PC-9 (cell line): ENCODE measurements at regions of chr11 and their contacts with region 1.

Region 1: DNA sequence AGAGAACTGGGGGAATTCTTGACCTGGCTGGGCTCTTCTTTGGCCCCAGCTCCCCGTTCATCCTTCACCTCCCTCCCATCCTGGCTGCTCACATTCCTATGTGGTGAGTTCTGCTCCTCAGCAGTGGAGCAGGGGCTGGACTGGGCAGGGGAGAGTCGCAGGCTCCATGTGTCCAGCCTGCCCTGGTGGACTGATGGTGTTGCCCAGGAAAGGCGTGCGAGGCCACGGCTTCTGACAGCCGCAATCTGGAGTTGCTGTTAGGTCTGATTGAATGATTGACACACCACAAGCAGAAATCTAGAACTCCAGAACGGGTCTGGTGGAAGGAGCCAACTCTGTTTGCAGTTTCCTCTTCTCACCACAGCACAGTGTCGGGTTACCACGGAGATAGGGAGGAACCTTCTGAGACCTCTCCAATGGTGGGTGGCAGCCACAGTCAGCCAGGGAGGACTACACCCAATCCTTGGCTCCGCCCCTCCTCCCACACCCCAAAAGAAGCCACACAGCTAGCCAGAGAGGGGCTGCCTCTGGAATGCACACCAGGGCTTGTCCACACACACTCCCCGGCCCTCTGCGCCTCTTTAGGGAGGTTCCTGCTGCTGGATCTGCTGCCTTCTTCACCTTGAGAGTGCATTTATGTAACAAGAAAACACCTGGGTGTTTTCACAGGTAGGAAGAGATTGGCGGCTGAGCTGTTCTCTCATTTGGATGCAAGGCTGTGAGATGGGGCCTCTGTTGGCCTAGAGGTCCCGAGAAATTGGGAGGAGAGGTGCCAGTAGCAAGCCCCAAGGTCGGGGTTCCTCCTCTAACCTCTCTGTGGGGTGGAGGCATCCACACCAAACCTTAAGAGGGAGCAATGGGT is 56.4 kb upstream of the CD44 start:
- DNase-seq: peak; percentile 94 to 95
- H3K4me3 ChIP-seq: peak overlapping the region; percentile 39; the same call in 1 of the 2 replicates
- H3K27ac ChIP-seq: peak overlapping the region; percentile 85
- H3K4me1 ChIP-seq: peaks cover 69% of the 10 kb centered on the region
- H3K27me3 ChIP-seq: no peaks in the 10 kb centered on the region
- CTCF ChIP-seq: no peak

Region 2: GRCh38 chr11:35013514-35014233 is 68.9 kb before region 1 on chr11:
- CTCF ChIA-PET with region 1: no interaction called
- POLR2A ChIA-PET with region 1: interaction called, 4 read pairs
- intact Hi-C with region 1: loop called (anchors 1 kb)
- DNase-seq: no peak
- H3K4me3 ChIP-seq: no peak overlapping the region
- H3K27ac ChIP-seq: no peak overlapping the region
- H3K4me1 ChIP-seq: peaks cover 56% of the 10 kb centered on the region
- H3K27me3 ChIP-seq: no peaks in the 10 kb centered on the region
- CTCF ChIP-seq: no peak

Region 3: GRCh38 chr11:35040221-35040942 is 42.2 kb before region 1 on chr11:
- CTCF ChIA-PET with region 1: no interaction called
- POLR2A ChIA-PET with region 1: interaction called, 7 read pairs
- intact Hi-C with region 1: loop called (anchors 1 kb)
- DNase-seq: peak; percentile 53 to 96
- H3K4me3 ChIP-seq: peak overlapping the region; percentile 55
- H3K27ac ChIP-seq: peak overlapping the region; percentile 87
- H3K4me1 ChIP-seq: peaks cover 65% of the 10 kb centered on the region
- H3K27me3 ChIP-seq: no peaks in the 10 kb centered on the region
- CTCF ChIP-seq: no peak

Region 4: DNA sequence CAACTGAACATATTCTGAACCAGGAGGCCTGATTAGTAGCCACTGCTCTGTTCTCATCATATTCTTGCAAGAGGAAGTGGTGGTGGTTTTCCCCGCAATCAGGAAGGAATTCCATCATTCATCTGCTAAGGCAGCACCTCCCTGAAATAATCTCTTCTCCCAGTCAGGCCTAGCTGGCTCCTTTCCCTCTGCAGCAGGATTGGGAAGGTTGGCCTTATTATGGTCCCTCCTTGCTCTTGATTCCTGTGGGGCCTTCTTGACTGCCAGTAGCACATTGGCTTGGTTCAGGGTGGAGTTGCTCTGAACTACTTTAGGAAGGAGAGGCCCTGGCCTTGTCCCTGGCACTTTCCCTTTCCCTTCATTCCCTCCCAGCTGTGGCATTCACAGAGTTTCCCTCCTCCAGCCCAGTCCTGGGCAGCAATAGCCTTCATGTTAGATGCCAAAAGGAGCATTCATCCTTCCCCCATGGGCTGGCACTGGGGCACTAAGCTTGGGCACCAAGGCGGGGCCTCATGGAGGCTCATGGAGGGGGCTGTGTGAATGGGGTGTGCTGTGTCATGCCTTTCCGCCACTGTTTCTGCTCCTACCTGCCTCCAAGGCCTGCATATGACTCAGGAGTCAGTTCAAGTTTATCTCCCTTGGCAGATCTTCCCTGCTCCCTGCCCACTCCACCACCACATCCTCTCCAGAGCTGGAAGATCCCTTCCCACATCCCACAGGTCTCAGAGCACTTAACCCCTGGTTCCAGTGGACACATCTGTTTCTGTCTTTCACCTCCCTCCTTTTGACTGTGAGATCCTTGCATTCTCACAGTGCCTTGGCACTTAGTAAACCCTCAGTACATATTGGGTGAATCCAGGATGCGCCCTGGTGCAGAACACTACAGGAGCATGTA is 28.9 kb after region 1 on chr11:
- CTCF ChIA-PET with region 1: interaction called, 3 read pairs
- POLR2A ChIA-PET with region 1: interaction called, 3 read pairs
- intact Hi-C with region 1: loop called (anchors 1 kb)
- DNase-seq: peak; percentile 87 to 88
- H3K4me3 ChIP-seq: no peak overlapping the region
- H3K27ac ChIP-seq: peak overlapping the region; percentile 82
- H3K4me1 ChIP-seq: peaks cover 43% of the 10 kb centered on the region
- H3K27me3 ChIP-seq: no peaks in the 10 kb centered on the region
- CTCF ChIP-seq: no peak

Region 5: GRCh38 chr11:35144136-35144741 is 61.7 kb after region 1 on chr11:
- CTCF ChIA-PET with region 1: no interaction called
- POLR2A ChIA-PET with region 1: interaction called, 3 read pairs
- intact Hi-C with region 1: loop called (anchors 1 kb)
- DNase-seq: peak; percentile 69 to 91
- H3K4me3 ChIP-seq: peak overlapping the region; percentile 70
- H3K27ac ChIP-seq: peak overlapping the region; percentile 91
- H3K4me1 ChIP-seq: peaks cover 85% of the 10 kb centered on the region
- H3K27me3 ChIP-seq: no peaks in the 10 kb centered on the region
- CTCF ChIP-seq: no peak

Region 6: DNA sequence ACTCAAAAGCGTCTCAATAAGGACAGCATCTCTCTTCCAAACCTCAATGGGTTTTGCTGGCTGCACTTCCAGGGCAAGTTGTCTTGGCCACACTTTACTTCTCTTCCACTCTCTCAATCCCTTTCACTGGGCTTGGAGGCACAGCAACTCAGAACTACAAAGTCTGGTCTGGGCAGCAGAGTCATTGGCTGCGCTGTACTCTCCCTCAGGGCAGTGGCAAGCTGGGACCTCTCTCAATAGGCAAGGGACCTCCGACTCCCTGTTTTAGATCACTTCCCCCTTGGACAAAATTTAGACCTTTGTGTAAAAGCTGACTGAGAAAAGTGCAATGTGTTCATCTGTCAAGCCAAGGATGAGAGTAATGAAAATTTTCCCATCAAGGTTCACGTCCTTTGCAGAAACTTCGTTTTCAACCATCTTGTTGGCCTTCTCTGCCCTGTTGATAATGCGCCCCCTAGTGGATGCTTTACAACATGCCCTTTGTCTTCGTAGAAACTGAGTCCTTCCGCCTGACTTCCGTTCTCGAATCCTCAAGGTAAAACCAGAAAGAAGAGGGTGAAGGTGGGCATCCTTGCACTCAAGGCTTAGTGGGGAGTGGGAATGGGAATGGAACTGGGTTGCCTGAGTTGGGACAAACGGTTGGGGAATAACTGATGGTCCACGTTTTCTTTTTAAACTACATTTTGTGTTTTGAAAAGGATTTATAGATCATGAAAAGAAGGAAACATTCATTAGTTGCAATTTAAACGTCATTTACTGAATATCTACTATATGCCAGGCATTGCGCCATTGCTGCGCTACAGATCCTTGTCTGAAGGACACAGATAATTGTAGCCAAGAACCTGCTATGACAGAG is 155.5 kb after region 1 on chr11:
- CTCF ChIA-PET with region 1: no interaction called
- POLR2A ChIA-PET with region 1: no interaction called
- intact Hi-C with region 1: loop called (anchors 2 kb)
- DNase-seq: no peak
- H3K4me3 ChIP-seq: no peak overlapping the region
- H3K27ac ChIP-seq: no peak overlapping the region
- H3K4me1 ChIP-seq: peaks cover 33% of the 10 kb centered on the region
- H3K27me3 ChIP-seq: no peaks in the 10 kb centered on the region
- CTCF ChIP-seq: peak; percentile 82

Region 7: GRCh38 chr11:35474688-35475087 is 392.1 kb after region 1 on chr11:
- CTCF ChIA-PET with region 1: no interaction called
- POLR2A ChIA-PET with region 1: no interaction called
- intact Hi-C with region 1: no loop called
- DNase-seq: no peak
- H3K4me3 ChIP-seq: no peak overlapping the region
- H3K27ac ChIP-seq: no peak overlapping the region
- H3K4me1 ChIP-seq: no peaks in the 10 kb centered on the region
- H3K27me3 ChIP-seq: peaks cover 50% of the 10 kb centered on the region
- CTCF ChIP-seq: no peak